Endothelial cell of umbilical vein (primary cell): ENCODE measurements at regions of chr2 and their contacts with region 1.

Region 1: DNA sequence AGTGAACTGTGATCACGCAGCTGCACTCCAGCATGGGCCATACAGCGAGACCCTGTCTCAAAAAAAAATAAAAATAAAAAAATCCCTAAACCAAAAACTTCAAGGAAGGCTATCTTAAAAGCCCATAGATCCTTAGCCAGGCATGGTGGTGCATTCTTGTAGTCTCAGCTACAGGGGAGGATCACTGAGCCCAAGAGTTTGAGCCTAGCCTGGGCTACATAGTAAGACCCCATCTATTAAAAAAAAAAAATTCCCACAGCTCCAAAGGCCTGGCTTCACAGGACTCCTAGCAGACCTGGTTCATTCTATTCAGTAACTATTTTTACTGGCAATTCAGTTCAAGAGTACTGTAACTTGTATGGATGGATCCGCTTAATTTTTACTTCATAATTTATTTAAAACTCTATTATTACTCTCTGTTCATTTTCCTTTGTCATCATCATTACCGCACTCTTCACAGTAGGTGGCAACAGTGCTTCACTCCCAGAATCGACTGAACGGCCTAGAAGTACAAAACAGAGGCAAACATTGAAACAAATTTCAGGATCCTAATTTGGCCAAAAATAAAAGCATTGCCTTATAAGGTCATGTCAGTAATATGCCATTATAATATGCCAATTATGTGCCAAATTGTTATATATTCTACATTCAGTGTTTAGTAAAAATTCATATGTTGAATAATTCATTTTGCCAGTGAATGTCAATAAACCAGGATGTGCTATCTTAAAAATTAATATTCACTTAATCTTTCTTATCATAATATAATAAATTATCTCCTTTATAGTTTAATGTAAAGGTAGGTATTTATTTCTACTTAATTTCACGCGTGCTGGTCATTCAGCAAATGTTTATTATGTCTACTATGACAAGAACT is 14.3 kb upstream of the STAM2 start:
- DNase-seq: peak; percentile 71
- H3K4me3 ChIP-seq: no peak overlapping the region
- H3K27ac ChIP-seq: no peak overlapping the region
- H3K4me1 ChIP-seq: no peaks in the 10 kb centered on the region
- H3K27me3 ChIP-seq: no peaks in the 10 kb centered on the region
- CTCF ChIP-seq: peak; percentile 58 to 64
- POLR2A ChIP-seq: no peak

Region 2: GRCh38 chr2:152407204-152407721 is 217.4 kb after region 1 on chr2:
- CTCF ChIA-PET with region 1: interaction called, 3 read pairs
- POLR2A ChIA-PET with region 1: no interaction called
- dilution Hi-C with region 1: no loop called
- intact Hi-C with region 1: loop called (anchors 5 kb)
- DNase-seq: no peak
- H3K4me3 ChIP-seq: no peak overlapping the region
- H3K27ac ChIP-seq: peak overlapping the region; percentile 19
- H3K4me1 ChIP-seq: peaks cover 57% of the 10 kb centered on the region
- H3K27me3 ChIP-seq: no peaks in the 10 kb centered on the region
- CTCF ChIP-seq: no peak
- POLR2A ChIP-seq: no peak

Region 3: DNA sequence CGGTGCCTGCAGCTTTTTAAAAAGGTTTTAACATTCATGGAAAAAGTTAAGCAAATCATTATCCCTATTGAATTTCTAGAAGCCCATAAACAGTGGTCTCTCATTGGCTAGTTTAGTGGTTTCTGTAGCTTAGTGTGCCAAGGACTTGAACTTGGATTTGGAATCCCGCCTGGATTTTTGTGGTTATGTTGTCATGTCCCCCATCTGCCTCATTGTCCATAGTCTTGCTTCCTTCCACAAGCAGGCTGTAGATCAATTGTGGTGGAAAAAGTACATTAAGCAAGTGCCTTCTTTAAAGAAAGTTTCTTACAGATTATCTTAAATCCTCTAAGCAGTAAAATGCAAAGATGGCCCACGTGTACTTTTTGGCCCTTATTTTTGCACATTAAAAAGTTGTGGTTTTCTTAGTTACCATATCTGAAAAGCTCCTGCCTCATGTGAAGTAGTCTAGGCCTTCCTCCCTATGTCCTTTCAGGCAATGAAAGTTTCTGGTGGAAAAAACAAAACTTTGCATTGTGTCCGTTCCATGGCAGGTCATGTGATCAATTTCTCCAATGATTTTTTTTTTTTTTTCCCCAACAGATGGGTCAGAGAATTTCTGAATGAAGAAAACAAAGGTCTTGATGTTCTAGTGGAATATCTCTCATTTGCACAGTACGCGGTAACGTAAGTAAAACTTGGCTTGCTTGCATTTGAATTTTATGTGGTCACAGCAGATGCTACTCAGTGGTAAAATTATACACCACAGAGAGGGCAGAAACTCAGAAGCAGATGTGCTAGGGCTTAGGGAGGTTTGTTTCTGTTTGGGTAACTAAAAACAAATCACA is 368.5 kb after region 1 on chr2:
- CTCF ChIA-PET with region 1: no interaction called
- POLR2A ChIA-PET with region 1: no interaction called
- dilution Hi-C with region 1: no loop called
- intact Hi-C with region 1: loop called (anchors 2 kb)
- DNase-seq: no peak
- H3K4me3 ChIP-seq: no peak overlapping the region
- H3K27ac ChIP-seq: no peak overlapping the region
- H3K4me1 ChIP-seq: no peaks in the 10 kb centered on the region
- H3K27me3 ChIP-seq: no peaks in the 10 kb centered on the region
- CTCF ChIP-seq: no peak
- POLR2A ChIP-seq: no peak

Region 4: DNA sequence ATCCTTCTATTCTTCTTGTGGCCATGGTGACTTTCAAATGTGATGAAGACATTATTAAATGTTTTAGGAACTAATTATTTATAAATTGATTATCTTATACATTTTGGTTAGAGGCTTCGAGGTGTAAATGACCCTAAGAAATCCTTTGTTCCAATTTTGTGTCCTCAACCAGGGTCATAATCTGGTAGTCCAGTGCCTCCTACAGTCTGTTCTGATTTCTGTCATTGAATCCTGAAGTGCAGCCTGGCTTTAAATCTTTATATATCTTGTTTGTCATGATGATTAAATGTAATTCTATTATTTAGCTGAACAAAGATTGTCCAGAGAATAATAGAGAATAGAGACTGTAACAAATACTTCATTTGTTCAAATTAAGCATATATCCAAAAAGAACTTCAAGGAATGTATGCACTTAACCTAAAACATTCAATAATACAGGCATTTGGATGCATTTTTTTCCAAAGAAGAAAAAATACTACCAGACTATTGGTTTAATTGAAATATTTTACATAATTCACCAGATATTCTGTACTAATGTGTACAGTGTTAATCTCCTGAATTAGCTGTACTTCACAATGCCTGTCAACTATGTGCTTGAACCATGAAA is 437.6 kb after region 1 on chr2:
- CTCF ChIA-PET with region 1: interaction called, 7 read pairs
- POLR2A ChIA-PET with region 1: no interaction called
- dilution Hi-C with region 1: no loop called
- intact Hi-C with region 1: loop called (anchors 1 kb)
- DNase-seq: peak; percentile 64
- H3K4me3 ChIP-seq: no peak overlapping the region
- H3K27ac ChIP-seq: no peak overlapping the region
- H3K4me1 ChIP-seq: no peaks in the 10 kb centered on the region
- H3K27me3 ChIP-seq: no peaks in the 10 kb centered on the region
- CTCF ChIP-seq: peak; percentile 43 to 46
- POLR2A ChIP-seq: no peak